Activated CD4-positive, alpha-beta memory T cell treated with anti-CD3 and anti-CD28 coated beads, Interleukin-2, amount 10 ng/mL, durations not matched to agents 7 days and 5 days (primary cell): ENCODE measurements at regions of chr3 and their contacts with region 1.

Region 1: DNA sequence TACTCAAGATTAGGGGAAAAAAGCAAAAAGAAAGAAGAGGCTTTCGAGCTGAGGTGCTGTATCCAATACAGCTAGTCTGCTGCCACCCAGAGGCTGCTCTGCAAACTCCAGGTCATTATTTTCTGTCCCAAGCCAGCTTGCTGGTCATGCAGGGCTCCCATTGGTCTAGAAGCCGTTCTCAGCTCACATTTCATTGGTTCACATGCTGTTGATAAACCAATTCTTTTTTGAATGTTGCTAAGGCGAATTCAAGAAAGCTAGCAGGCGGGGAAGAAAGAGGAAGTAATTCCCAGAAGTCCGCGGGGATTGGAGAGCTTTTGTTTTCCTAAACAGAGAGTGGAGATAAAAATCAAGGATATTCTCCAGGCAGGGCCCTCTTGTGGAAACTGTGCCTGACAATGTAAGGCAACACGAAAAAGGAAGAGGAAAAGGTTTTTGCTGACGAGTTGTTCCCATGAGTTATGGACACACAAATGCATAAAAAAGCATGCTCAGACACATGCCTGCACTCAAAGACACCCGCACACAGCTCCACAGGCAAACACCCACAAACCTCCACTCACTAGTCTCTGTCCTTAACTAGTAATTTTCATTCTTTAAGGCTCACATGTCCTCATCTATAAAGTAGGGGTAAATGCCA is 33.4 kb downstream of the FSTL1 start:
- DNase-seq: peak; percentile 91
- H3K4me3 Mint-ChIP-seq: peak overlapping the region; percentile 71
- H3K27ac Mint-ChIP-seq: no peak overlapping the region
- H3K4me1 Mint-ChIP-seq: peaks cover 19% of the 10 kb centered on the region
- H3K27me3 Mint-ChIP-seq: peaks cover 6% of the 10 kb centered on the region

Region 2: DNA sequence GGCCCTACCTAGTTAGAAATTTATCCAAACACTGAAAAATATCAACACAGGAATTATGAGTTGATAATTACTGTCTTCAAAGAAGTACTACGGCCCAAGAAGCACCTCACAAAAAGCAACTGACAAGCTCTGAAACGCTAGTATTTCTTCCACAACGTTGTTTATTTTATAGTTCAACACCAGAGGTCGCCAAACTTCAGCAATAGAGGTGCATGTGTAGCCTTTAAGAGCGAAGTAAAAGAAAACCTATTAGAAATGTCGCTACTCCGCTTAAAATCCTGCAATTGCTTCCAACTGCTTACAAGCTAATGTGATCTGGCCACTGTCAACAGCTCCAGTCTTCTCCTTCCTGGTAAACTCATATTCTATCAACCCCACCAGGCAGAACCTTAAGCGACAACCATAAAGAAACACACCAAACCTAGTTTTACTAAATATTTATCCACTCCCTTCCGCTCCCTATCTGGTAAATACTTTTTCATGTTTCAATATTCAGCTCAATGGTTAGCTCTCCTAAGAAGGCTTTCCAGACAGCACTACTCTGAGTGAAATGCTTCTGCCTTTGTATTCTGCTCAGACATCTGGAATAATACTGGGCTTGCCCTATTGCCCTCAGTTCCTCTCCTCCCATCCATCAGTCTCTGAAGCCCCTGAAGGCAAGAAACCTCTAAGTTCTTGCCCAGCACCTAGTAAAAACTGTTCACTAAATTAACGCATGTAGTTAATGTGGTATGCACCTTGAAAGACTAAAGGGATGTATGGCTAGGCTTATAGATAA is 525.3 kb before region 1 on chr3:
- CTCF ChIA-PET with region 1: interaction called, 37 read pairs
- POLR2A ChIA-PET with region 1: interaction called, 3 read pairs
- DNase-seq: peak; percentile 26
- H3K4me3 Mint-ChIP-seq: no peak overlapping the region
- H3K27ac Mint-ChIP-seq: no peak overlapping the region
- H3K4me1 Mint-ChIP-seq: peaks cover 4% of the 10 kb centered on the region
- H3K27me3 Mint-ChIP-seq: no peaks in the 10 kb centered on the region

Region 3: GRCh38 chr3:120039642-120040610 is 377.5 kb before region 1 on chr3:
- CTCF ChIA-PET with region 1: interaction called, 12 read pairs
- POLR2A ChIA-PET with region 1: no interaction called
- DNase-seq: no peak
- H3K4me3 Mint-ChIP-seq: no peak overlapping the region
- H3K27ac Mint-ChIP-seq: no peak overlapping the region
- H3K4me1 Mint-ChIP-seq: peaks cover 4% of the 10 kb centered on the region
- H3K27me3 Mint-ChIP-seq: no peaks in the 10 kb centered on the region

Region 4: DNA sequence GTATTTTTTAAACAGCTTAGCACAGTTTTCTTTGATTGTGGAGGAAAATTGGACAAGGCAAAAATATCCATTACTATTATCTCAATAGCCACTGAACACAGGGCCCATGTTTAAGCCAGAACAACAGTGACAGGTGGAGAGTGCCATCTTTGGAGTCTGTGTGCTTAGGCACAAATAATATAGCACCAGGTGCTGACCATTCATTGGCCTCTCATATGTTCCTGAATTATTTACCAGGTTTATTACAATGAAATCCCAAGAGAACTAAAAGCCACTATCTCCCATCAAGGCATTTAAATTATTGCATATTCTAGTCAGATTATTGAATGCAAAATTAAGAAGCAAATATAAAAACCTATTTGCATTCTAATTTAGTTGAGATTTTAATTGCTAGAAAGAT is 172.0 kb before region 1 on chr3:
- CTCF ChIA-PET with region 1: interaction called, 97 read pairs
- POLR2A ChIA-PET with region 1: interaction called, 6 read pairs
- DNase-seq: no peak
- H3K4me3 Mint-ChIP-seq: no peak overlapping the region
- H3K27ac Mint-ChIP-seq: no peak overlapping the region
- H3K4me1 Mint-ChIP-seq: no peaks in the 10 kb centered on the region
- H3K27me3 Mint-ChIP-seq: peaks cover 12% of the 10 kb centered on the region

Region 5: DNA sequence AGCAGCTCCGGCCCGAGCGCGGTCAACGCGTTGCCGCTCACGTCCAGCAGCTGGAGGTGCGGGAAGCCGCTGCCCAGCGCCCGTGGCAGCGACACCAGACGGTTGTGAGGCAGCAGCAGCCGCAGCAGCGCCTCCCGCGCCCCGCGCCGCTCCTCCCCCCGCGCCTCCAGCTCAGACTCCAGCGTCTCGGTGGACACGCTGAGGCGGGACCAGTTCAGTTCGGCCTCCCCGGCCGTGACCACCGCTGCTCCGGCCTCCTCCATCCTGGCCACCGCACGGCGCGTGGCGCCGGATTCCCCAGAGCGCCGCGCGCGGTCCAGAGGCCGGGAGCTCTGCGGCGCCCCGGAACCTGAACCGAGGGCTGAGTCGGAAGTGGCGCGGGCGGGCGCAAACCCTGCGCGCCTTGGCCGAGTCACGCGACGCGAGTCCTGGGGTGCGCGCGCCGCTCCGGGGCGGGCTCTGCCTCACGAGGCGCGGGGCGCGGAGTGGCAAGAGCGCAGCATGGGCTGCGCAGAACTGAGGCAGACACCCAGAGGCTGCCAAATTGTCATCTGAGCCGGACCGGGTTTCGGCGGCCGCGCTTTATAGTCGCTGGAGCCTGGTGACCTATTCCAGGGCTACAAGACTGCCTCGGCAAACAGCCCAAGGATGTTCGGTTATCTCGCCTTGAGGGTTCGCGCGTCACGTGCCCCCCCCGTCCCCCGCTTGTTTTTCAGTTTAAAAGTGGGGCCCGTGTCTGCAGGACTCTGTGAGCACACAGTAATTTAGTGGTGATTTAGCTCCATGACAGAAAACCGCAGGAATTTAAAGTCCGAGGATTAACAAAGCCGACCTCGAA is 68.2 kb before region 1 on chr3 and contains the start of gene LRRC58:
- CTCF ChIA-PET with region 1: interaction called, 37 read pairs
- POLR2A ChIA-PET with region 1: interaction called, 12 read pairs
- DNase-seq: peak; percentile 89
- H3K4me3 Mint-ChIP-seq: peak within 1 kb of the TSS; percentile 89
- H3K27ac Mint-ChIP-seq: peak within 1 kb of the TSS; percentile 85
- H3K4me1 Mint-ChIP-seq: peaks cover 47% of the 10 kb centered on the region
- H3K27me3 Mint-ChIP-seq: peaks cover 20% of the 10 kb centered on the region
- total RNA-seq, gene LRRC58: 23.2 to 24.8 TPM

Region 6: GRCh38 chr3:120432150-120432860 is 14.9 kb after region 1 on chr3:
- CTCF ChIA-PET with region 1: interaction called, 12 read pairs
- POLR2A ChIA-PET with region 1: no interaction called
- DNase-seq: no peak
- H3K4me3 Mint-ChIP-seq: no peak overlapping the region
- H3K27ac Mint-ChIP-seq: no peak overlapping the region
- H3K4me1 Mint-ChIP-seq: no peaks in the 10 kb centered on the region
- H3K27me3 Mint-ChIP-seq: peaks cover 23% of the 10 kb centered on the region

Region 7: DNA sequence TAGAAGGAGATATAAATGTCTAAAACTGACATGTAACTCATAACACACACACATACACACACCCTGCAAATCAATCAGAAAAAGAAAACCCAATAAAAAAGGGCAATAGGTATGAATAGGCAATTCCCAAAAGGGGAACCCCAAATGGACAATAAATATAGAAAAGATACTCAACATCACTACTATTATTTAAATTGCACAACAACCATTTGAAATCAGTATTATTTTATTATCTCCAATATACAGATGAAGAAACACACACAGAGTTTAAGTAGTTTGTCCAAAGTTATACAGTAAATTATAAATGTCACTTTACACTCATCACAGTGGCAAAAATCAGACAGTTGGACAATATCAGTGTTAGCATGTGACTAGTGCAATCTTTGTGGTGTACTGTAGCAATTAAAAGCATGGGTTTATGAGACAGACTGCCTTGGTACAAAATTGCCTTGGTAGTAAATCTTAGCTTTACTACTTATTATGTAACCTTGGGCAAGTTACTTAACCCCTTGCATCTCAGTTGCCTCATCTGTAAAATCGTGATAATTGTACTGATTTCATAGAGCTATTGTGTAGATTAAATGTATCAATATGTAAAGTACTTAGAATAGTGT is 36.8 kb after region 1 on chr3:
- CTCF ChIA-PET with region 1: no interaction called
- POLR2A ChIA-PET with region 1: no interaction called
- DNase-seq: no peak
- H3K4me3 Mint-ChIP-seq: no peak overlapping the region
- H3K27ac Mint-ChIP-seq: no peak overlapping the region
- H3K4me1 Mint-ChIP-seq: peaks cover 12% of the 10 kb centered on the region
- H3K27me3 Mint-ChIP-seq: peaks cover 40% of the 10 kb centered on the region

Region 8: DNA sequence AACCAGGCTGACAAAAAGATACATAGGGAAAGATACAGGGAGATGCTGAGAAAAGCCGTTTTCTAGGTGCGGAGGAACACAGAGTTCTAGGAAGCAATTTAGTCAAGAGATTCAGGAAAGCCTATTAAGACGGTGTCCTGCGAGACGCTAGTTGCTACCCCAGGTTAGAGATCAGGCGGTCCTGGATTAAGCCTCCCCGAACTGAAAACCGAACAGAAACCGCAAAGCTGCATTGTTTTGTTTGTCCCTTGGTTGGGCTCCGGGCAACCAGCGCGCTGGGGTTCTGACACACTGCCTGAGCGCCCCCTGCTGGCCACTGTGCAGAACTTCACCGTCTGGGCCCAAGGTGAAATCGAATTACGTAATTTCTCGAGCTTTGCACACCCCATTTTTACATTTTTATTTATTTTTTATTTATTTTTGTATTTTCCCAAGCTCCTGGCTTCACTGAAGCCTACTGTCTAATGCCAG is 141.4 kb after region 1 on chr3:
- CTCF ChIA-PET with region 1: interaction called, 55 read pairs
- POLR2A ChIA-PET with region 1: interaction called, 3 read pairs
- DNase-seq: peak; percentile 88
- H3K4me3 Mint-ChIP-seq: peak overlapping the region; percentile 74
- H3K27ac Mint-ChIP-seq: no peak overlapping the region
- H3K4me1 Mint-ChIP-seq: peaks cover 13% of the 10 kb centered on the region
- H3K27me3 Mint-ChIP-seq: peaks cover 2% of the 10 kb centered on the region